Naive thymus-derived CD4-positive, alpha-beta T cell (primary cell): ENCODE measurements at regions of chrX and their contacts with region 1.

Region 1: DNA sequence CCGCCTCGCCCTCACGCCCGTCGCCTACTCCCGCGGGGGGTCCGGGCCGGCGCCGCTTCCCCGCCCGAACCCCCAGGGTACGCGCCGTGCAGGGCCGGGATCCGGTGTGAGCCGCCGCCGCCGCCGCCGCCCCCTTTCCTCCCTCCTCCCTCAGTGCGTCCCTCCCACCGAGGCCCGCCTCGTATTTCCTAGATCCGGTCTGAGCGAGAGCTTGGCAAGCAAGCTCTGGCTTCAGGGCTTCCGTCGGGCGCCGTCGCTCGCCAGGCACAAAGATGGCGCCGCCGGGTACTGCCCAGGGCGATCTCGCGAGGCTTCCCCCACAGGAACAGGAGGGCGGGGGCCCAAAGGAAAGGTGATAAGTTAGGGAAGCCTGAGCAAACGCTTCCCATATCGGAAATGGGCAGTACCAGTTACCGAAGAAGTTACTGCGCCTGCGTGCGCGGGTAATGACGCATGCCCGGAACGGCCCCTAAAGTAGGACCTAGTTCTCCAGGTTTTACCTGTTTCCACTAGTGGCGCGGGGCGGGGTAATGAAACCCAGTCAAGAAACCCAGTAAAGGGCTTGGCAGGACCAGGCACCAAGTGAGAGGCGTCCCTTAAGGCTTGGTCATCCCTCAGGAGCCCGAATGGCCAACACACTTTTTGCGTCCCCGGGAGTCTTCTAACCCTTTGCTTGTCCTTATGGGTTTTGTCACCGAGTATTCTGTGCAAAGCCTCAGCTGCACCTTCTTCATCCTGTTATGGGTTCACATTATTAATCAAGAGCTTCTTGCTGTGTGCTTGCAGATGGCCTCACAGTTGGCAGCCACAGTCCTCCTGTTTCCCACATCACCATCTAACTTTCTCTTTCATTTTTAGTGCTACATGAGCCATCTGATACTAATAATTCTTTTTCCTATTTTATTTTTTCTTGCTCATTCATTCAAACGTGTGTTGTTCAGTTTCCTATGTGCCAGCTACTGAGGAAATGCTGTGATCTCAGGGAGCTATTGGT is at the start of gene TAB3:
- DNase-seq: peak; percentile 82 to 96 (median 93)
- ATAC-seq: peak; percentile 94
- H3K4me3 ChIP-seq: peak within 1 kb of the TSS; percentile 81
- H3K4me3 Mint-ChIP-seq: peak within 1 kb of the TSS; percentile 81 to 96 (median 90)
- H3K27ac ChIP-seq: peak within 1 kb of the TSS; percentile 82
- H3K27ac Mint-ChIP-seq: peak within 1 kb of the TSS; percentile 89 to 97 (median 95)
- H3K4me1 ChIP-seq: peaks cover 0 to 6% of the 10 kb centered on the region in 2 donors
- H3K4me1 Mint-ChIP-seq: peaks cover 9 to 44% (median 31%) of the 10 kb centered on the region in 7 donors
- H3K27me3 ChIP-seq: no peaks in the 10 kb centered on the region
- H3K27me3 Mint-ChIP-seq: no peaks in the 10 kb centered on the region
- total RNA-seq, gene TAB3: 17.5 to 24.8 (median 20.8) TPM

Region 2: GRCh38 chrX:30635630-30636029 is 253.8 kb before region 1 on chrX:
- CTCF ChIA-PET with region 1: no interaction called
- POLR2A ChIA-PET with region 1: no interaction called
- intact Hi-C with region 1: loop called in 1 of 2 experiments (anchors 5 kb)
- DNase-seq: peak in 1 of 9 donors; percentile 14
- ATAC-seq: peak; percentile 46
- H3K4me3 ChIP-seq: no peak overlapping the region
- H3K4me3 Mint-ChIP-seq: no peak overlapping the region
- H3K27ac ChIP-seq: no peak overlapping the region
- H3K27ac Mint-ChIP-seq: no peak overlapping the region
- H3K4me1 ChIP-seq: no peaks in the 10 kb centered on the region
- H3K4me1 Mint-ChIP-seq: no peaks in the 10 kb centered on the region
- H3K27me3 ChIP-seq: no peaks in the 10 kb centered on the region
- H3K27me3 Mint-ChIP-seq: no peaks in the 10 kb centered on the region

Region 3: DNA sequence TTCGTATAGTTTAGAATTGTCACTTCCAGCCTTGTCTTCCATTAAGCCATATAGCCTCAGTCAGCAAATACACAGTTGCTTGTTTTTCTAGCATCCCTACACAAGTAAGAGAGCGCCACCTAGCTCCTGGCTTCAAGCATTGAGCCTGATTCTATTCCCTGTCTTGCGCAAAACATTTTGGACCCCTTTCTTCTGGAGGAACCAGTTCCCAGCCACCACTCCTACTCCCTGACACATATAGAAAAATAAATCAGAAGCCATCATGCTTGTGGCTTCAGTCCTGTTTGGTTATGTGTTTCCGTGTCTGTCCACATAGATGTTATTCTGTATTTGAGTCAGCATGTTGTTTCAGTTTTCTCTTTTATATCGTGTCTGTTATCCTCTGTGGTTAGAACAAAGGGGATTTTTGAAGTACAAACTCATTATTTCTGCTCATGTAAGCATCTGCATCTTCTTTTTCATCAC is 176.4 kb before region 1 on chrX:
- CTCF ChIA-PET with region 1: no interaction called
- POLR2A ChIA-PET with region 1: no interaction called
- intact Hi-C with region 1: loop called in 1 of 2 experiments (anchors 1 kb)
- DNase-seq: peak in 6 of 9 donors; percentile 1 to 43 (median 16)
- ATAC-seq: peak; percentile 63
- H3K4me3 ChIP-seq: no peak overlapping the region
- H3K4me3 Mint-ChIP-seq: peak overlapping the region in 1 of 10 donors; percentile 73
- H3K27ac ChIP-seq: no peak overlapping the region
- H3K27ac Mint-ChIP-seq: peak overlapping the region in 2 of 9 donors; percentile 62 to 96
- H3K4me1 ChIP-seq: no peaks in the 10 kb centered on the region
- H3K4me1 Mint-ChIP-seq: peaks cover 0 to 60% (median 6%) of the 10 kb centered on the region in 7 donors
- H3K27me3 ChIP-seq: no peaks in the 10 kb centered on the region
- H3K27me3 Mint-ChIP-seq: no peaks in the 10 kb centered on the region

Region 4: GRCh38 chrX:30822068-30822681 is 67.3 kb before region 1 on chrX:
- CTCF ChIA-PET with region 1: interaction called, 4 read pairs
- POLR2A ChIA-PET with region 1: interaction called, 5 read pairs
- intact Hi-C with region 1: loop called in 1 of 2 experiments (anchors 1 kb)
- DNase-seq: no peak
- ATAC-seq: peak; percentile 32
- H3K4me3 ChIP-seq: no peak overlapping the region
- H3K4me3 Mint-ChIP-seq: no peak overlapping the region
- H3K27ac ChIP-seq: no peak overlapping the region
- H3K27ac Mint-ChIP-seq: no peak overlapping the region
- H3K4me1 ChIP-seq: peaks cover 0 to 6% of the 10 kb centered on the region in 2 donors
- H3K4me1 Mint-ChIP-seq: peaks cover 5 to 28% (median 23%) of the 10 kb centered on the region in 7 donors
- H3K27me3 ChIP-seq: no peaks in the 10 kb centered on the region
- H3K27me3 Mint-ChIP-seq: no peaks in the 10 kb centered on the region

Region 5: GRCh38 chrX:30865015-30865414 is 24.4 kb before region 1 on chrX:
- CTCF ChIA-PET with region 1: interaction called, 3 read pairs
- POLR2A ChIA-PET with region 1: interaction called, 3 read pairs
- intact Hi-C with region 1: loop called in 1 of 2 experiments (anchors 2 kb)
- DNase-seq: peak in 3 of 9 donors; percentile 3 to 7 (median 4)
- ATAC-seq: no peak
- H3K4me3 ChIP-seq: no peak overlapping the region
- H3K4me3 Mint-ChIP-seq: no peak overlapping the region
- H3K27ac ChIP-seq: no peak overlapping the region
- H3K27ac Mint-ChIP-seq: no peak overlapping the region
- H3K4me1 ChIP-seq: no peaks in the 10 kb centered on the region
- H3K4me1 Mint-ChIP-seq: peaks cover 0 to 7% (median 0%) of the 10 kb centered on the region in 7 donors
- H3K27me3 ChIP-seq: no peaks in the 10 kb centered on the region
- H3K27me3 Mint-ChIP-seq: no peaks in the 10 kb centered on the region